Mucosa of descending colon (tissue), 3 donors: ENCODE measurements at regions of chr4 and their contacts with region 1.

Region 1: DNA sequence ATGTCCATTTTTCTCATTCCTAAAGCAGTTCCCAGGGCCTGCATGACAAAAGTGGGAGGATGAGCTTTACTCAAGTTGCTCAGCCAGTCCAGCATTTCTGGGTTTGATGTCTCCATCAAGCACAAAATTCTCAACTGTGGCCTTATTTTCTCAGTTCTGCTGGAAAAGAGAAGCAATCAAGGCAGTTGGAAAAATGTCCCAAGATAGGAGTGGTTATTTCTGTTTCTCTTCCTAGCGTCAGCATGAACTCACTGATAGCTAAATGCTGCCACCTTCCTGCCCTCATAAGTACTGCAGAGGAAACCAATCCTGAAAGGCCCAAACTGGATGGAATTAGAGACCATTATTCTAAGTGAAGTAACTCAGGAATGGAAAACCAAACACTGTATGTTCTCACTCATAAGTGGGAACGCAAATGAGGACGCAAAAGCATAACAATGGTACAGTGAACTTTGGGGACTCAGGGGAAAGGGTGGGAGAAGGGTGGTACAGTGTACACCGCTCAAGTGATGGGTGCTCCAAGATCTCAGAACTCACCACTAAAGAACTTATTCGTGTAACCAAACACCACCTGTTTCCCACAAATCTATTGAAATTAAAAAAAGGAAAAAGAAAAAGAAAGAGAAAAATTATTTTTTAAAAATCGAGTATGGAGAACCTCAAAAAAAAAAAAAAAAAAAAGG is 29.6 kb downstream of the ADH7 start:
- DNase-seq: peak in 1 of 3 donors; percentile 88
- ATAC-seq: peak; percentile 83
- H3K4me3 ChIP-seq: no peak overlapping the region
- H3K4me1 ChIP-seq: peaks cover 24% of the 10 kb centered on the region
- CTCF ChIP-seq: peak; percentile 75

Region 2: GRCh38 chr4:99117876-99118693 is 287.5 kb before region 1 on chr4:
- intact Hi-C with region 1: loop called (anchors 10 kb)
- DNase-seq: no peak
- ATAC-seq: no peak
- H3K4me3 ChIP-seq: no peak overlapping the region
- H3K4me1 ChIP-seq: no peaks in the 10 kb centered on the region
- CTCF ChIP-seq: no peak

Region 3: GRCh38 chr4:99144070-99144469 is 261.5 kb before region 1 on chr4 and contains the start of gene ADH4:
- intact Hi-C with region 1: no loop called
- DNase-seq: no peak
- ATAC-seq: peak; percentile 59
- H3K4me3 ChIP-seq: no peak within 1 kb of the TSS
- H3K4me1 ChIP-seq: peaks cover 6% of the 10 kb centered on the region
- CTCF ChIP-seq: no peak
- total RNA-seq, gene ADH4: 0.19 to 0.41 (median 0.23) TPM

Region 4: GRCh38 chr4:99165745-99166362 is 239.7 kb before region 1 on chr4:
- intact Hi-C with region 1: no loop called
- DNase-seq: no peak
- ATAC-seq: no peak
- H3K4me3 ChIP-seq: no peak overlapping the region
- H3K4me1 ChIP-seq: no peaks in the 10 kb centered on the region
- CTCF ChIP-seq: no peak

Region 5: DNA sequence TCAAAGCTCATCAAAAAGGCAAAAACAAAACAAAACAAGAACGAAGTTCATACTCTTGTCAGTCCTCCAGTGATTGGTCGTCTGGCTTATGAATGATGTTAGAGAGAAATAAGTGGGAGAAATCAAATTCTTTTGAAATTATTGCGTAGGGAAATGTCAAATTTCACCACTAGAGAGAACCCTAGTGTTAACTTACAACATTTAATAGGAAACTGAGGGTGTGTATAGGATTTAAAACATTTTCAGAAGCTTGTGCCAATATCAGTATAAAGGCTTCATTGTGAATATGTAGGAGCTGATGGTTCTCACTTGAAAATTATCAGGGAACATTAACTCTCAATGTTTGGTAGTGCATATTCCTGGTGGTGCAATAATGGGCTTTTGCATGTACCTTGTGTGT is 203.9 kb before region 1 on chr4:
- intact Hi-C with region 1: loop called (anchors 5 kb)
- DNase-seq: no peak
- ATAC-seq: peak; percentile 45
- H3K4me3 ChIP-seq: no peak overlapping the region
- H3K4me1 ChIP-seq: peaks cover 5% of the 10 kb centered on the region
- CTCF ChIP-seq: no peak

Region 6: GRCh38 chr4:99642725-99643489 is 237.3 kb after region 1 on chr4:
- intact Hi-C with region 1: no loop called
- DNase-seq: no peak
- ATAC-seq: no peak
- H3K4me3 ChIP-seq: no peak overlapping the region
- H3K4me1 ChIP-seq: no peaks in the 10 kb centered on the region
- CTCF ChIP-seq: no peak

Region 7: DNA sequence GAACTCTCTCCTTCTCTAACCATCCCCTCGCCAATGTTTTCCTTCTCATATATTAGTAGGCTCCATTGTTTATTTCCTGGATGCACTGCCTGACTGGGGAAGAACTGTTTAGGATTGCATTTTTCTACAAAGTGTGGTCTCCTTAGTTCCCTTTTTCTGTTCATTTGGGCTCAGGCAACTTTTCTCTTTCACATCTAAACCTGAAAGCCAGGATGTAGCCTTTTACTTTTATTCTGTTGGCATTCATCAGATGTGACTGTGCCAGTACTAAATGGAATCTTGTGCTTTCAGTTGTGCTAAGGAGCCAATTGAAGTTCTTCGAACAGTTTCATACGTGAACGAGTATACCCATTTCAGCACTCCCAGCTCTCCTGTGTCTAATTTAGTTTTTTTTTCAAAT is 724.9 kb after region 1 on chr4:
- intact Hi-C with region 1: no loop called
- DNase-seq: no peak
- ATAC-seq: no peak
- H3K4me3 ChIP-seq: no peak overlapping the region
- H3K4me1 ChIP-seq: no peaks in the 10 kb centered on the region
- CTCF ChIP-seq: no peak